CD4-positive, alpha-beta T cell (primary cell): ENCODE measurements at regions of chr11 and their contacts with region 1.

Region 1: GRCh38 chr11:1050581-1051355 is 14.2 kb upstream of the MUC6 start:
- DNase-seq: peak; percentile 29 to 86 (median 68)
- ATAC-seq: peak; percentile 91
- H3K4me3 ChIP-seq: no peak overlapping the region
- H3K4me3 Mint-ChIP-seq: no peak overlapping the region
- H3K27ac ChIP-seq: no peak overlapping the region
- H3K27ac Mint-ChIP-seq: no peak overlapping the region
- H3K4me1 ChIP-seq: peaks cover 10% of the 10 kb centered on the region
- H3K4me1 Mint-ChIP-seq: no peaks in the 10 kb centered on the region
- H3K27me3 ChIP-seq: peaks cover 5 to 11% of the 10 kb centered on the region in 2 experiments
- H3K27me3 Mint-ChIP-seq: peaks cover 5% of the 10 kb centered on the region
- CTCF ChIP-seq: peak; percentile 53

Region 2: DNA sequence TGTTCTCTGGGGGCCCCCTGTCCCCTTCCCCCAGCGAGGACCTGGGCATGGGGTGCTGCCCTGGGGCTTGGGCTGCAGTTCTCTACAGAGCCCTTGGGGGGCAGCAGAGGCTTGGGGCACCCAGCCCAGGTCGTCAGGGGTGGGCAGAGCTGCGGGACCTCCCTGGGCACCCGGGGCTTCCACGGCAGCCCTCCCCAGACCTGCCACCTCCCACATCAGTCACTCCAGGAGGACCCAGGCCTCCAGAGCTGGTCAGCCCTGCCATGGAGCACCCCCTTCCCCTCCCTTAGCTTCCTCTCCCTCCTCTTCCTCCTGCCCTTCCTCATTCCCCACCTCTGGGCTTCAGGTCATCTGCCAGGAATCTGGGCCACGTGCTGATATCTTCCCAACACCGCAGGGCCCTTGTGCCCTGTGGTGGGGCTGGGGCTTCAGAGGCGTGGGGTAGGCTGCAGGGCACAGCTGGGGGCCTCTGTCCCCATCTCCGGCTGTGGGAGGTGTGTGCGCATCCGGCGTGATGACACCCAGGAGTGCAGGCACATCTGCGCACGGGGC is 202.3 kb before region 1 on chr11:
- CTCF ChIA-PET with region 1: interaction called, 11 read pairs
- POLR2A ChIA-PET with region 1: no interaction called
- intact Hi-C with region 1: loop called in 1 of 2 experiments (anchors 1 kb)
- DNase-seq: peak; percentile 49 to 79 (median 59)
- ATAC-seq: peak; percentile 85
- H3K4me3 ChIP-seq: no peak overlapping the region
- H3K4me3 Mint-ChIP-seq: peak overlapping the region; percentile 56
- H3K27ac ChIP-seq: no peak overlapping the region
- H3K27ac Mint-ChIP-seq: no peak overlapping the region
- H3K4me1 ChIP-seq: peaks cover 30% of the 10 kb centered on the region
- H3K4me1 Mint-ChIP-seq: peaks cover 4% of the 10 kb centered on the region
- H3K27me3 ChIP-seq: peaks cover 7 to 18% of the 10 kb centered on the region in 2 experiments
- H3K27me3 Mint-ChIP-seq: peaks cover 4% of the 10 kb centered on the region
- CTCF ChIP-seq: peak; percentile 86

Region 3: GRCh38 chr11:870127-870413 is 180.7 kb before region 1 on chr11:
- CTCF ChIA-PET with region 1: no interaction called
- POLR2A ChIA-PET with region 1: no interaction called
- intact Hi-C with region 1: no loop called
- DNase-seq: no peak
- ATAC-seq: no peak
- H3K4me3 ChIP-seq: no peak overlapping the region
- H3K4me3 Mint-ChIP-seq: no peak overlapping the region
- H3K27ac ChIP-seq: no peak overlapping the region
- H3K27ac Mint-ChIP-seq: no peak overlapping the region
- H3K4me1 ChIP-seq: no peaks in the 10 kb centered on the region
- H3K4me1 Mint-ChIP-seq: no peaks in the 10 kb centered on the region
- H3K27me3 ChIP-seq: no peaks in the 10 kb centered on the region
- H3K27me3 Mint-ChIP-seq: no peaks in the 10 kb centered on the region
- CTCF ChIP-seq: no peak

Region 4: DNA sequence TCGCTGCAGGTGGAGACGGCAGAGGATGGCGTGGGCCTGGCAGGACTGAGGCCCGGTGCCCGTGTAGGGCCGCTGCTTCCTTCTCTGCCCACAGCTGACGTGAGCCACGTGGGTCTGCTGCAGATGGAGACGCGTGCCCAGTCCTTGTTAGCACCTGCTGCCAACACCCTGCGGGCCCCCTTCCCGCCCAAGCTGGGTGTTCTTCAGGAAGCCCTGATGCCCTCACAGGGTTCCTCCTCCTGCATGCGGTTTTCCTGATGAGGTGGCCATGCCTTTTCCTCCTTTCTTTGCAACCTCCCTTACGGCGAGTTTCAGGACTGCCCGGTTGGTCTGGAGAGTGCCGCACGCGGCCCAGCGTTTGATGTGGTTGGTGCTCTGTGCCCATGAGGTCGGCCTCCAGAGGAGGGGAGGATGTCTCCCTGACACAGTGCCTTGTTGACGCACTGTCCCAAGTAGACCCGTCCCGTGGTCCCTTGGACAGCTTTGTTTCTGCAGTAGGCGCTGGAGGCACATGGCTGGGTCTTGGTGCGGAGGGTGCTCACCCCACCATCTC is 80.4 kb before region 1 on chr11:
- CTCF ChIA-PET with region 1: no interaction called
- POLR2A ChIA-PET with region 1: no interaction called
- intact Hi-C with region 1: no loop called
- DNase-seq: peak in 4 of 14 experiments; percentile 8 to 58 (median 52)
- ATAC-seq: no peak
- H3K4me3 ChIP-seq: no peak overlapping the region
- H3K4me3 Mint-ChIP-seq: no peak overlapping the region
- H3K27ac ChIP-seq: no peak overlapping the region
- H3K27ac Mint-ChIP-seq: peak overlapping the region; percentile 76
- H3K4me1 ChIP-seq: peaks cover 42% of the 10 kb centered on the region
- H3K4me1 Mint-ChIP-seq: peaks cover 25% of the 10 kb centered on the region
- H3K27me3 ChIP-seq: no peaks in the 10 kb centered on the region
- H3K27me3 Mint-ChIP-seq: no peaks in the 10 kb centered on the region
- CTCF ChIP-seq: no peak